AG04449 (cell line): ENCODE measurements at regions of chr6 and their contacts with region 1.

Region 1: DNA sequence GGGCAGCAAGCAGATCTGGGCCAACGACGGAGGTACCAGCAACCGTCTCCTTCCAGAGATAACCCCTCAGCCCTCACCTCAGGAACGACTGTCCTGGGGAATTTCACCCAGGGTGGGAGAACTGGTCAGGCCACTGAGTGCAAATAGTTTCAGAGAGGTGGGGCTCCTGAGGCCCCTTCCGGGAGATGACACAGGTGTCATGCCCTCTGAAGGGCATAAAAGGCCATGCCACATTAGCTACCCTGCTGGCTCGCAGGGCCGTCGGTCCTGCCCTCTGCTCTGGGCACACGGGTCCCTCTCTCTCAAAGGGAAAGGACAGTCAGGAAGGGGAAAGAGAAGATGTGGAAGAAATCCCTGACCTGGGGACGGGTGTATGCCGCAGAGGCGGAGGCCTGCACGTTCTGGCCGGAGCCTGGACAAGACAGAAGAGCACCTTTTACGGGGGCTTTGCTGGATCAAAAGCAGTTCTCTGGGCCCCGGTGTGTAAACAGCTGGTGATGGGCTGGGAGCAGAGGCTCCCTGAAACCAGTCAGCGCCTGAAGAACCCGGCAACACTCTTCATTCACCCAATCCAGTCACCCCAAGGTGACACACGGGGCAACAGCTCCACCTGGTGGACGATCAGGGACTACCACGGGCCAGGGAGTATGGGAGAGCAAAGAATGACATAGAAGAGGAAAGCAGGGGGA is 6.4 kb upstream of the TAF8 start:
- DNase-seq: no peak
- H3K4me3 ChIP-seq: no peak overlapping the region; the same call in 1 of the 2 replicates
- CTCF ChIP-seq: peak; percentile 94

Region 2: GRCh38 chr6:41591859-41592502 is 451.9 kb before region 1 on chr6:
- CTCF ChIA-PET with region 1: no interaction called
- POLR2A ChIA-PET with region 1: no interaction called
- DNase-seq: no peak
- H3K4me3 ChIP-seq: no peak overlapping the region
- CTCF ChIP-seq: peak; percentile 86

Region 3: DNA sequence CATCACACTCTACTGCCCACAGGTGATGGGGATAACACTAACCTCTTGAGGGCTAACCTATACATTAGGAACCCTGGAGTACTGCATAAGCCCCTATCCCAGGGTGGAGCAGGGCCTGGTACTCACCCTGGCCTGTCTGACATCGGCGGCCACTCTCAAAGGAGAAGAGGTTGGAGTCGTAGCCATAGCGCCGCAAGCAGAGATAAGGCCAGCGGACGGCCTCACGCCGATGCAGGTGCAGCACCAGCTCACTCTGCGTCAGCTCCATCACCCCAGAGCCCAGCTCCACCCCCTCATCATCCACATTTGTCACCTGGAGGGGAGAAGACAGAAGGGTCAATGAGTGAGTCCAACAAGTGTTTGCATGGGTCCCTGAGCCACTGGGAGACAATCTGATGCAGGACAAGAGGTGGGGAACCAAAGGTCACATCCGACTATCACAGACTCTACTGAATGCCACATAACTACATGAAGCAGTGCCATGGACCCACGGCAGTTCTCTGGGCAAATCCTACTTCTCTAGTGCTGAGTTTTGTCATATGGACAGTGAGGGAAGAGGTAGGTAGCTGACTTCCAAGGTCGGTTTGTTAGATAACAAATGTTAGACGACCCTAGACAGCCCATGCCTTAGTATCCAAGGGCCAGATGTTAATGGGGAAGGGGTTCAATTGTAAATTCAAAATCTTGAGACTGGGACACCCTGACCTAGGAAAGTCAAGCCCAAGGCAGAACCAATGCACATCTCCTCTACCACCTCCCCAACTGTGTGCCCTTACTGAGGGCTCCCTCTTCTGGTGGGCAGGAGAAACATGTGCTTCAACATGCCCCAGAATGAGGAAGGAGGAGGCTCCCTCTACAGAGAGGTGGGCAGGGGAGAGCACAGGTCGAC is 268.4 kb before region 1 on chr6:
- CTCF ChIA-PET with region 1: interaction called, 514 read pairs
- POLR2A ChIA-PET with region 1: no interaction called
- DNase-seq: no peak
- H3K4me3 ChIP-seq: no peak overlapping the region
- CTCF ChIP-seq: peak; percentile 89

Region 4: DNA sequence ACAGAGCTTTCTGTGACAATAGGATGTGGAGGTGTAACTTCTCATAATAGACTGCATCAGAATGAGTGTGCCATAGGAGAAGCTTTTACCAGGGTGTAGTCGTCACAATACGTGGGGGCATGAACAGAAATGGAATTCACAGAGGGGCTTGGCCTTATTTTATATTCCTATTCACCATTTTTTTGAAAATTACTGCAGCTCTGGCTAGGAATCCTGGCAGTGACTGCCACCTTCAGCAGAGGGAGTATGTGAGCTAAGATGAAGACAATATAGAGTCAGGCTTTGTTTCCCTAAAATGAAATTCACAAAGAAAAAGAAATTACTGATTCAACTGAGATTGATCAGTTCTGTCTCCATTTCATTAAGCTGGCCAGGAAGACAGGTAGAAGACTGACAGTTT is 242.6 kb before region 1 on chr6:
- CTCF ChIA-PET with region 1: interaction called, 514 read pairs
- POLR2A ChIA-PET with region 1: no interaction called
- DNase-seq: no peak
- H3K4me3 ChIP-seq: no peak overlapping the region
- CTCF ChIP-seq: peak; percentile 60

Region 5: GRCh38 chr6:41846666-41847237 is 197.2 kb before region 1 on chr6:
- CTCF ChIA-PET with region 1: interaction called, 84 read pairs
- POLR2A ChIA-PET with region 1: no interaction called
- DNase-seq: peak; percentile 69
- H3K4me3 ChIP-seq: no peak overlapping the region
- CTCF ChIP-seq: peak; percentile 71

Region 6: DNA sequence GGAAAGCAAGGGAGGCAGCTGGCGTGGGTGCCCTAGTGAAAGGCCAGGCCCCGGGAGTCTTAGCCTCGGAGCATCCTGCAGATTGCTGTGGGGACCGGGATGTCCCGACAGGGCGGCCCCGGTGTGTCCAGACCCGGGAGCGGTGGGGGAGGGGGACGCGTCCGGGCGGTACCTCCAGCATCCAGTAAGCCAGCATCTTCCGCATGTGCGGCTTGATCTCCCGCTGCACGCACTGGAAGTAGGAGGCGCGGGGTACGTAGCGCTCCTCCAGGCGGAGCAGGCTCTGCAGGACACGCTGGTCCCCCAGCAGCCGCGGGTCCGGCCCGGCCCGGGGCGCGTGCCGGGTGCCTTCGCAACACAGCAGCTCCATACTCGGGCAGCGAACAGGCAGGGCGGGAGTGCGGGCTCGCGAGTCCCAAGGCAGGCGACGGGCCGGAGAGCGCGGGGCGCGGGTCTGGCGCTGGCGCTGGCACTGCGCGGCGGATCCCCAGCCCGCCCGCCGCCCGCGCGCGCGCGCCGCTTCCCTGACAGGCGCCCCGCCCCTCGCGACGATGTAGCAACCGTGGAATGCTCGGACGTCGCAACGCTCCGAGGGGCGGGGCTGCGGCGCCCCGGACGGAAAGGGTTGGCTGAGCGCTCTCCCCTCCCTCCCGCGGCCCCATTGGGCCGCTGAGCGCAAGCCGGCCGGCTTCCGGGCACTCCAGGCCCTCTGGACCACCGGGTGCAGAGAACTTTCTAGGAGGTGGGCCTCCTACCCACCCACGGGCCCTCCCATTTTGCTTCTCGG is 102.5 kb before region 1 on chr6 and contains the start of gene CCND3:
- CTCF ChIA-PET with region 1: interaction called, 139 read pairs
- POLR2A ChIA-PET with region 1: no interaction called
- DNase-seq: no peak
- H3K4me3 ChIP-seq: peak within 1 kb of the TSS; percentile 96
- CTCF ChIP-seq: no peak

Region 7: GRCh38 chr6:42028234-42029061 is 15.5 kb before region 1 on chr6:
- CTCF ChIA-PET with region 1: interaction called, 18 read pairs
- POLR2A ChIA-PET with region 1: interaction called, 9 read pairs
- DNase-seq: no peak
- H3K4me3 ChIP-seq: no peak overlapping the region
- CTCF ChIP-seq: no peak

Region 8: GRCh38 chr6:42066156-42066555 is 22.2 kb after region 1 on chr6:
- CTCF ChIA-PET with region 1: no interaction called
- POLR2A ChIA-PET with region 1: no interaction called
- DNase-seq: no peak
- H3K4me3 ChIP-seq: no peak overlapping the region
- CTCF ChIP-seq: no peak

Region 9: DNA sequence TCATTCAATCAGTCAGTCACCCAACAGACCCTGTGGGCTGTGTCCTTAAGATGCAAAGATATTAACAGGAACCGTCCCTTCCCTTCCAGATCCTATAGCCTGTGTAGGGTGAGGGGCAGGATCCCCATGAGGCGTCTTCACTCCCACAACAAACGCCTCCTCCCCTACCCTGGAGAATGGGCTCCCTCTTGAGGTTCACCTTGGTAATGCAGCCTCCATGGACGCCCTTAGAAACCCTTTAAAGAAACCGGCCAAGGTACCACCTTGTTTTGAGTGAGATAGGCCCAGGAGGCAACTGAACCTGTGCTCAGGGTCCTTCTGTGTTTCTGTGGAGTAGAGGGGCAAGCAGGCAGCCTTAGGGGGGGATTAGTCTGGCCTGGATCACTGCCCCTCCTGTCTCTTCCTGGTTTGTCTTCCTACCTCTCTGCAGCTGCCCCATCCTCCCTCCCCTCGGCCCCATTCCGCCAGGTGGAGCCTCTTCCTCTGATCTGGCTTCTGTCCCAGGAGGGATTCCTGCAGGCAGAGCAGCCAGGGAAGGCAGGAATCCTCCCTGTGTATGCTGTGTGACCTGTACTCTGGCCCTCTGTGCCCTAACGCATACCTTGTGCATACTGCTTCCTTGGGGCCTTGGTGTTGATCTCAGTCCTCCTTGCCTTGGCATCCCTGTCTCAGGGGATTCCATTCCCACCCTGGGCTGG is 122.7 kb after region 1 on chr6:
- CTCF ChIA-PET with region 1: interaction called, 10 read pairs
- POLR2A ChIA-PET with region 1: no interaction called
- DNase-seq: no peak
- H3K4me3 ChIP-seq: no peak overlapping the region
- CTCF ChIP-seq: peak; percentile 91